ENCODE measurements at regions of chr2 and their contacts with region 1.

Region 1: DNA sequence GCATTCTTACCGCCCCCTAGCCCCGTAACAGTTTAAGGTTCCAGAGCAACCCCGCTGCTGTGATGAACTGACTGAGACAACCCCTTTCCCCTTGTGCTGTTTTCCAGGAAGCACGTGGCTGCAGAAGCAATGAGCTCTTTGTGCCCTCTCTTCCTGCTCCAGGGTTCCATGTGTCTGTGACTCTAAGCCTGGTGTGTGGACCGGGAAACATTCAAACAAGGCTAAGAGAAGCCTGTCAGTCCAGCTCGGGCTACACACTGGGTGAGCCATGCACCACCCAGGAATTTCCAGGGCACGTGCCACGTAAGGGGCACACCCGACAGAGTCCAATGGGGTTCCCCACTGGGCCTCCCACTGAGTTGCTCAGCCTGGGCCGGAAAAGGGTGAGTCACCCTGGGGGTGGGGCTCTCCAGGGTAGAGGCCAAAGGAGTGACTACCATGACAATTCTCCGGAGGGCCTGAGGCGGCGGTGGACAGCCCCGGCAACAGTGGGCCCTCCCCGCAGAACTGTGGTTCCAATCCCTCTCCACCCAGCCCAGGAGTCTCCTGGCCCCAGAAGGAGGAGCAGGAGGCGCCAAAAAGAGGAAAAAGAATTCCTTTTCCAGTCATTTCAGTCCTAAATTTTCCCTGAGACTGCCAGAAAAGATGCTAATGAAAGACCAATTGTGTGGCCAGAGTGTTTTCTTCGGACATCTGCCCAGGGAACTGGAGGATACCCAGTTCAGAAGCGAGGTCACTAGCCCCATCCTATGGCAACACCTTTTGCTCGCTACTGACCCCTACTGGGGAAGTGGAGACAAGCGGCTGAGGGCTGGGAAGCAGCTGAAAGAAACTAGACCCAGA is 157.8 kb upstream of the SLC1A4 start:
- DNase-seq: peak; percentile 94
- H3K4me3 Mint-ChIP-seq: peak overlapping the region; percentile 52
- H3K27ac Mint-ChIP-seq: peak overlapping the region; percentile 81
- H3K4me1 Mint-ChIP-seq: peaks cover 16% of the 10 kb centered on the region
- H3K27me3 Mint-ChIP-seq: peaks cover 5% of the 10 kb centered on the region

Region 2: DNA sequence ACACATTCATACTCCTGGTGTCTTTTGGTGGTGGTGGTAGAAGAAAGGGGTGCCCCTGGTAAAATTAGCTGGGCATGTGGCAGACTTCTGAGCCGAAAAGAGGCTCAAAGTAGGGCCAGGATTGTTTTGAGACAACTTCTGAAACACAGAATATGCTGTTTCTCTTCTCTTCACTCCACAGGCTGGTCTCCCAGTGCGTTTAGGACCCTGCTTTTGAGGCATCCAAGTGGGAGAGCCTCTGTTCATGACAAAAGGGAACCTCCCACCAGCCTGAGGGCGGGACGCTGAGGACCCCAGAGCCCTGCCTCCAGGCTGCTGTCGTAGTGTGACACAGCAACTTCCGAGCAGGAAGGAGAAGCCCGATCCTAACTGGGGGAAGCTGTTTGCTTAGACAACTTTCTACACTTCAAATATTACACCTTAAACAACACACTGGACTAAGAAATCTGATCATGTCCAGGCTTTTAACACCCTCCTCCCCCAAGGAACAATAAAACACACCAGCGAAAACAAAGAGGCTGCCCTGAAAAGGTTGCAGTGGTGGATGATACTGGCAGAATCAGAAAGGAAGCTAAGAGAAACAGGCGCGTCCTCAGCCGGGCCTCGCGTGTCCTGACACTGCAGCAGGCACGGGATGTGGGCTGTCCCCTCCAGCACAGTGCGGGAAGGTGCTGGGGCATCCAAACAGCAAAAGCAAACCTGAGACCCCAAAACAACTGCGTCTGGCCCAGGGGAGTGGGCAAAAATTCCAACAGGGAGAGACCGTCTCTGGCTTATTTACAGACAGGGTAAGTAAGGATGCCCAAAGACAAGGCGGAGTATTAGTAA is 187.0 kb before region 1 on chr2:
- CTCF ChIA-PET with region 1: interaction called, 105 read pairs
- intact Hi-C with region 1: loop called (anchors 1 kb)
- DNase-seq: peak; percentile 78
- H3K4me3 Mint-ChIP-seq: peak overlapping the region; percentile 87
- H3K27ac Mint-ChIP-seq: peak overlapping the region; percentile 87
- H3K4me1 Mint-ChIP-seq: peaks cover 80% of the 10 kb centered on the region
- H3K27me3 Mint-ChIP-seq: no peaks in the 10 kb centered on the region

Region 3: DNA sequence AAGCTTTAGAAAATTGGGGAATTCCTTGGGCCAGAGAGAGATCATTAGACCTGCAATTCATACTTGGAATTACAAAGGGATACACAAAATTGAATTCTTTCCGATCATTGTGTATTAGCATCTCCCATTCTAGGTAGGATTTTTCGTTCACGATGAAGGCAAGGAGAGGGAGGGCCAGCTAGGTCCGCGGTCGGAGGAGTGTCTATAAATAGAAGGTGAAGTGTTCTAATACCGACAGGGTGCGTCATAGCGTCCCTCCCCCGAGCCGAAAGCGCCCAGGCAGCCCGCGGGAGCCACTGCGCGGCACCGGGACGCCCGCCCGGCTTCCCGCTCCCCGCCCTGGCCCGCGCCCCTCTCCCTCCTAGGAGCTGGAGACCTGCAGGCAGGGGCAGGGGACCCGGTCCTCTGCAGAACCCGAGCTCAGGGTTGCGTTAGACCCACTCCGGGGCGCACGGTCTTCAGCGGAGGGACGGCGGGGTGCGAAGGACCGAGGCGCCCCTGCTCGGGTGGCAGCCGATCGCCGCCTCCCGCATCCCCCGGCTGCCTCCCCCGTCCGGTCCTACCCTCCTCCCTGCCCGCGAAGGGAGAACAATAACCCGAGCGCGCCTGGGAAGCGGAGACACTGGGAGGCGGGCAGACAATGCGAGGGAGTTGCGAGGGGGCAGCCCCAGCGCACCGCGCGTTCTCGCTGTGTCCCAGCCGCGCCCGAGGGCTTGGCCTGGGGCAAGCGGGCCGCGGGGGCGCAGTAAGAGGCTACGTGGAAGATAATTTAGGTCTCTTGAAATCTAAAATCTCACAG is 63.5 kb before region 1 on chr2:
- CTCF ChIA-PET with region 1: interaction called, 7 read pairs
- intact Hi-C with region 1: loop called (anchors 1 kb)
- DNase-seq: peak; percentile 85
- H3K4me3 Mint-ChIP-seq: peak overlapping the region; percentile 80
- H3K27ac Mint-ChIP-seq: peak overlapping the region; percentile 76
- H3K4me1 Mint-ChIP-seq: peaks cover 26% of the 10 kb centered on the region
- H3K27me3 Mint-ChIP-seq: no peaks in the 10 kb centered on the region

Region 4: GRCh38 chr2:64819774-64820696 is 11.3 kb before region 1 on chr2:
- CTCF ChIA-PET with region 1: interaction called, 23 read pairs
- intact Hi-C with region 1: loop called (anchors 1 kb)
- DNase-seq: peak; percentile 72
- H3K4me3 Mint-ChIP-seq: peak overlapping the region; percentile 39
- H3K27ac Mint-ChIP-seq: peak overlapping the region; percentile 85
- H3K4me1 Mint-ChIP-seq: peaks cover 19% of the 10 kb centered on the region
- H3K27me3 Mint-ChIP-seq: no peaks in the 10 kb centered on the region

Region 5: DNA sequence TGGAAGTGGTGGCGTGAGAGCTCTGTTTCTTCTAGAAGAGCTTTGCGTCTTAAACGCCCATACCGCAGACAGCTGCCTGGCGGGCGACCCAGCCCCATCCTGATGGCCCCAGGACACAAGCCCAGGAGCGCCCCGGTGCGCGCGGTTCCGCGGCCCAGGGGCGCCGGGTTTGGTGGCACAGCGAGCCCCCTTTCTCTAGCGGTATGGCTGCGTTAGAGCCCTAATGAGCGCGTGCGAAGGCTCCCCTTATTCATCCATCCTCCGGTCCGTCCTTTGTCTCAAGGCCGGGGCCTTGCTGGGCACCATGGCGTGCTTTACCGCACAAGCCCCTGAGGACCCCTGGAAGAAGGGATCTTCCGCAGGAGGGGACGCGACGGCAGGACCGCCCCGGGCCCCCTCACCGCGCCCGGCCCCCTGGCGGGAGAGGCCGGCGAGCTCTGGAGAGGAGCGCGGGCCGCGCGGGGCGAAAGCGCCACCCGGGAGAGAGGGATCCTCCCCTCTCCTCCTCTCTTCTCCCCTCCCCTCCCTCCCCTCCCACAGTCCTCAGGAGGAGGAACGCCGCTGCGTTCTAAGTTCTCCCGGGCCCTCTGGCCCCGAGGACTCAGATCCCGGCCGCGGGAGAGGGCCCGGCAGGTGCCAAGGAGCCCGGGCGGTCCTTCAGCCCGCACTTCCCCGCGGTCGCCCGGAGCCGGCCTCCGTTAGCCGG is 157.2 kb after region 1 on chr2:
- CTCF ChIA-PET with region 1: no interaction called
- intact Hi-C with region 1: no loop called
- DNase-seq: peak; percentile 35
- H3K4me3 Mint-ChIP-seq: peak overlapping the region; percentile 60
- H3K27ac Mint-ChIP-seq: peak overlapping the region; percentile 7
- H3K4me1 Mint-ChIP-seq: peaks cover 35% of the 10 kb centered on the region
- H3K27me3 Mint-ChIP-seq: peaks cover 11% of the 10 kb centered on the region

Region 6: DNA sequence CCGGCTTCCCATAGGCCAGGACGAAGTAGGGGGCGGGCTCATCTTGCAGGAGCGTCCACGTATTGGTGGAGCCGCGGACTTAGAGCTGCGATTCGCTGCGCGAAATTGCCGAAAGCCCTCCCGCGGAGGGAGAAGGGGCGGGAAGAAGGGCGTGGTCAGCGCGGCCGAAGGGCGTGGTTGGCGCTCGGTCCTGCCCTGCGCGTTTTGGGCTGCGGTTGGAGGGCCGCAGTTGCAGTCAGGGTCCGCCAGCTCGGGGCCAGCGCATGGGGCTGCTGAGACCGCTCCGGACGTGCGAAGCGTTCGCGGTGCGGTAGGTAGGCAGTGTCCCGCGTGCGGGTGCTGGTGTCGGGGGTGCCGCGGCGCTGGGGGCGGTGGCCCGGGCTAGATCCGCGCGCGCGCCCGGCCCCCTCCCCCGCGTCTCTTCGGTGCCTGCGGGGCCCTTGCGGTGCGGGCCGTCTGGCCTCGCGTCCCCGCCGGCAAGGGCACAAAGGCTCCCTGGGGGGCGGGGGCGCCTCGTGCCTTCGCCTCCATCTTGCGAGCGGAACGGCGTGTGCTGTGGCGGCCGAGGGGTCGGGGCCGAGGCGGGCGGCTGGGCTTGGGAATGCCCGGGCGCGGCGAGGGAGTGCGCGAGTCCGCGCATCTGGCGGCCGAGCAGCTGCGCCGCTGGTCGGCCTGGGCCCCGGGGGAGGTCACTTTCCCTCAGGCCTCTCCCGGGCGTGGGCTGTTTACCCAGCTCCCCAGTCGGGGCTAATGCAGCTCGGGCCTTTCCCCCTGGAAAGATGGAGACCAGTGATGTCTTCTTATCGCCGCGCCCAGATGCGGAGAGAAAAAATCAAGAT is 225.1 kb after region 1 on chr2 and contains the start of gene CEP68:
- CTCF ChIA-PET with region 1: no interaction called
- intact Hi-C with region 1: loop called (anchors 2 kb)
- DNase-seq: peak; percentile 98
- H3K4me3 Mint-ChIP-seq: peak within 1 kb of the TSS; percentile 93
- H3K27ac Mint-ChIP-seq: peak within 1 kb of the TSS; percentile 67
- H3K4me1 Mint-ChIP-seq: peaks cover 51% of the 10 kb centered on the region
- H3K27me3 Mint-ChIP-seq: no peaks in the 10 kb centered on the region
- total RNA-seq, gene CEP68: 6.0 to 7.3 TPM

Region 7: DNA sequence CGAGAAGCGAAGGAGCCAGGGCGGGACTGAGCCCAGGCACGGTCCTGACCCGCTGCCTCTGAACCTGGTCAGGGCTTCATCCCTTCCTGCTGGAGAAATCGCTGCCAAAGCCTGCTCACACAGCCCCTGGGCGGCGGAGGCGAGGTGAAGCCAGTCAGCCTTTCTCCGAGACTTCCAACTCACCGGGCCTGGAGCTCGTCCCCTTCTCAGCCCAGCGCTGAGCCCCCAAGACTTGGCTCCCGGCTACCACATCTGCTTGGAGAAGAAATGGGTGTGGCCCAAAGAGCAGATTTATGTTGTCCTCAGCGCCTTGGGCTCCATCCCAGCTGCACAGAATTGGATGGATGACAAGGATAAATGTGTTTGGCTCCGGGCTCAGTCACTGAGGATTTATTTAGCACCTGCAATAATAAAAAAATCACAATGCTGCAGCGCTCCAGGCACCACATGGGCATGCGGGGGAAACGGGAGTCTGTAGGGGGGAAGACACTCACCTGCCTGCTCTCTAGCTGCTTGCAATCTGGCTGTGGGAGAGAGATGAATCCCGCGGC is 461.2 kb after region 1 on chr2:
- CTCF ChIA-PET with region 1: no interaction called
- intact Hi-C with region 1: no loop called
- DNase-seq: no peak
- H3K4me3 Mint-ChIP-seq: no peak overlapping the region
- H3K27ac Mint-ChIP-seq: no peak overlapping the region
- H3K4me1 Mint-ChIP-seq: no peaks in the 10 kb centered on the region
- H3K27me3 Mint-ChIP-seq: no peaks in the 10 kb centered on the region